ENCODE measurements at regions of chr4 and their contacts with region 1.

Region 1: GRCh38 chr4:26330186-26330787 is 9.5 kb downstream of the RBPJ start:
- DNase-seq: no peak
- H3K4me3 ChIP-seq: no peak overlapping the region
- H3K27ac ChIP-seq: no peak overlapping the region
- H3K4me1 ChIP-seq: peaks cover 4 to 48% (median 17%) of the 10 kb centered on the region in 4 donors
- H3K27me3 ChIP-seq: no peaks in the 10 kb centered on the region
- CTCF ChIP-seq: peak; percentile 64 to 76 (median 72)
- EP300 ChIP-seq: no peak
- POLR2A ChIP-seq: no peak

Region 2: GRCh38 chr4:25710637-25711036 is 619.6 kb before region 1 on chr4:
- in situ Hi-C with region 1: no loop called
- intact Hi-C with region 1: no loop called
- DNase-seq: no peak
- H3K4me3 ChIP-seq: no peak overlapping the region
- H3K27ac ChIP-seq: no peak overlapping the region
- H3K4me1 ChIP-seq: no peaks in the 10 kb centered on the region
- H3K27me3 ChIP-seq: no peaks in the 10 kb centered on the region
- CTCF ChIP-seq: no peak
- EP300 ChIP-seq: no peak
- POLR2A ChIP-seq: no peak

Region 3: DNA sequence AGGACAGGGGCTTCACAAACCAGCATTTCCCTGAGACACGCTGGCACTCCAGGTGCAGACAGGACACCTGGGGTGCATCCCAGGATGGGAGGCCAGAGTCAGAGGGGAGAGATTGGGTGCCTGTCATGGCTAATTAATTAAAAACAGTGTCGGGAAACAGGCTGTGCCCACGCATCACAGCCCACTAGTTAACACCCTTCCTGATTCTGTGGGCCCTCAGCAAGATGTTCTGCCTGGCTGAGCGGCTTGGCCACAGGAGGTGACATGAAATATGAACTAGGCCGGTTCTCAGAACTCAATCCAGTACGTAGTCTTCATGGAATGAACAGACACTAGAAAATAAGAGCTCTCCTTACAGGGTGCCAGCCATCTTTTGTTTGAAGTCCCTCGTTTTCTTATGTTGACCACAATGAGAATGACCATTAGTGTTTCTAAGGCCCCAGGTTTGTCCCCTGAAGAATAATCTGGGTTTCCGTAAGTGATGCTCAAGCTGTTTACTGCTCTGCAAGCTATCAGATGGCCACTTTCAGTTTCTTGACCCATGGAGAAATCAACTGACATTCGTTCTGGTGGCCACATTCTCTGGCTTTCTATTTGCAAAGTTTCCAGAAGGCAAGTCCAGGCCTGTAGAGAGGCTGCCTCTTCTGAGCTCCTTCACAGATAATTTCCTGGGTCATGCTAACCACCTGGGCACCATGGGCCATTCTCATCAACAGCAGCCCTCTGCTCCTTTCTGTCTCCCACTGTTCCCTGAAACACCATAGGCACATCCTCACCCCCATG is 602.4 kb before region 1 on chr4:
- in situ Hi-C with region 1: no loop called
- intact Hi-C with region 1: no loop called
- DNase-seq: no peak
- H3K4me3 ChIP-seq: no peak overlapping the region
- H3K27ac ChIP-seq: no peak overlapping the region
- H3K4me1 ChIP-seq: no peaks in the 10 kb centered on the region
- H3K27me3 ChIP-seq: no peaks in the 10 kb centered on the region
- CTCF ChIP-seq: no peak
- EP300 ChIP-seq: no peak
- POLR2A ChIP-seq: no peak

Region 4: DNA sequence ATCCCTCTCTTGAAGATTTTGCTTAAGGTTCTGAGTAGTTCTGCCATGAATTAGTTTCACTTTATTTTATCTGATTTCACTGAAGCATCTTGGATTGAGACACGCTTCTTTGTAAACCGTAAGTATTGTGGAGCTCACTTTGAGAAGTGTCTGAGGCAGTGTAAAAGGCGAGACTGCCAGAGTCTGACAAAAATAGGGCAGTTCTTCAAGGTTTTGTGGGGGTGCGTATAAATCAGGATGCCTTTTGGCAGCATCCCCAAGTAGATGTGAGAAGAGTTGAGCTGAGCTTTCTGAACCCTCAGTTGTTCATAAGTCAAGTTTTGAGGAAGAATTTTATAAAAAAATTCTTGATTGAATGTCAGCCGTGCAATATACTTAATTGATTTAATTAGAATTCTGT is 66.8 kb after region 1 on chr4:
- in situ Hi-C with region 1: loop called in 2 of 4 experiments (anchors 5 to 10 kb)
- intact Hi-C with region 1: no loop called
- DNase-seq: no peak
- H3K4me3 ChIP-seq: no peak overlapping the region
- H3K27ac ChIP-seq: peak overlapping the region in 1 of 4 donors; percentile 2
- H3K4me1 ChIP-seq: peaks cover 0 to 3% (median 0%) of the 10 kb centered on the region in 4 donors
- H3K27me3 ChIP-seq: no peaks in the 10 kb centered on the region
- CTCF ChIP-seq: no peak
- EP300 ChIP-seq: no peak
- POLR2A ChIP-seq: no peak

Measured in transverse colon (tissue), 4 donors.